Dorsolateral prefrontal cortex (tissue), 120 donors: ENCODE measurements at regions of chr15 and their contacts with region 1.

Region 1: GRCh38 chr15:31758126-31758525 is 272.2 kb upstream of the CHRNA7 start:
- DNase-seq: peak; percentile 83 to 95 (median 90)
- H3K4me3 ChIP-seq: peak overlapping the region in 2 of 59 donors; percentile 2 to 10
- H3K27ac ChIP-seq: peak overlapping the region; percentile 23 to 92 (median 81)
- H3K27me3 ChIP-seq: no peaks in the 10 kb centered on the region
- CTCF ChIP-seq: peak in 2 of 56 donors; percentile 13 to 21

Region 2: GRCh38 chr15:31811641-31812040 is 53.5 kb after region 1 on chr15:
- intact Hi-C with region 1: loop called in 1 of 2 experiments (anchors 5 kb)
- DNase-seq: peak; percentile 65 to 88 (median 80)
- H3K4me3 ChIP-seq: peak overlapping the region in 3 of 59 donors; percentile 3 to 13 (median 12)
- H3K27ac ChIP-seq: peak overlapping the region; percentile 30 to 98 (median 89)
- H3K27me3 ChIP-seq: no peaks in the 10 kb centered on the region
- CTCF ChIP-seq: peak in 18 of 56 donors; percentile 6 to 47 (median 18)

Region 3: DNA sequence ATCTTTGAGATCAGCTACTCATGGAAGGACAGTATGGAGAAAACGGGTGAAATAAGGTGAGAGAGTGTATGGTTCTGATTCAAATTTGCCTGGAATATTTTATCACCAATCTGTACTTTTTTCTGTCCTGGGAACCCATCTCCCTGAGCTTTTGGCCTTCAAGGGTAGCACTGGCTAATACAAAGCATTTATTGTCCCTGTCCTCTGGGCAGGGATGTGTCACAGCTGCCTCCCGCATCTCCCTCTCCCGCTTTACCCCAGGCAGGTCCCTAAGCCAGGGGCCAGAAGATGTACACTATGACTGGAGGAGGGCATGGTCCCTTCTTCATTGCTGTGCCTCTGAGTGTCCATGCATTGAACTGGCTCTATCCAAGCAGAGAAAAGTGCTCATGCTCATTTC is 70.5 kb after region 1 on chr15:
- intact Hi-C with region 1: no loop called
- DNase-seq: no peak
- H3K4me3 ChIP-seq: no peak overlapping the region
- H3K27ac ChIP-seq: peak overlapping the region in 57 of 59 donors; percentile 13 to 96 (median 82)
- H3K27me3 ChIP-seq: no peaks in the 10 kb centered on the region
- CTCF ChIP-seq: no peak

Region 4: GRCh38 chr15:31840849-31841476 is 82.8 kb after region 1 on chr15:
- intact Hi-C with region 1: loop called in 1 of 2 experiments (anchors 5 kb)
- DNase-seq: no peak
- H3K4me3 ChIP-seq: no peak overlapping the region
- H3K27ac ChIP-seq: peak overlapping the region; percentile 77 to 99 (median 96)
- H3K27me3 ChIP-seq: no peaks in the 10 kb centered on the region
- CTCF ChIP-seq: no peak

Region 5: DNA sequence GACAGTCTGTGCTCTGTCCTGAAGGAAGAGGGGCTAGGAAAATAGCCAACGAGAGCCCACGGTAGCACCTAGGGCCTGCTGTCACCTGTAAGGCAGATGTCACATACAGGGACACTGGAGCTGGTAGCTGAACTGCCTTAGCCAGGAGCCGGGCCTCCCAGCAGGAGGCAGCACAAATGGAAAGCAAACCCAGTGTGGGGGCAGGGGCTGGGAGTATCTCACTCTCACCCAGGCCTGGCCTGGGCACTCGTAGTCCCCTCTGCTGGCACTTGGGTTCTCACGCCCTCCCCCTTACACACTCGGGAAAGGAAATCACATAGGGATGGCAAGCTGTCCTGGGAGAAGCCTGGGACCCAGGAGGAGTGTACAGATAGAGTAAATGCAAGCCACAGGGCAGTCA is 99.1 kb after region 1 on chr15:
- intact Hi-C with region 1: loop called in 1 of 2 experiments (anchors 10 kb)
- DNase-seq: no peak
- H3K4me3 ChIP-seq: no peak overlapping the region
- H3K27ac ChIP-seq: peak overlapping the region in 56 of 59 donors; percentile 3 to 99 (median 68)
- H3K27me3 ChIP-seq: no peaks in the 10 kb centered on the region
- CTCF ChIP-seq: peak in 5 of 56 donors; percentile 7 to 18 (median 14)